ENCODE measurements at regions of chr2 and their contacts with region 1.

Region 1: GRCh38 chr2:13006829-13007717 is 290.3 kb downstream of the TRIB2 start:
- DNase-seq: no peak
- ATAC-seq: peak; percentile 91
- H3K4me3 ChIP-seq: no peak overlapping the region
- H3K27ac ChIP-seq: no peak overlapping the region
- H3K4me1 ChIP-seq: peaks cover 19% of the 10 kb centered on the region
- H3K27me3 ChIP-seq: no peaks in the 10 kb centered on the region
- CTCF ChIP-seq: peak; percentile 97

Region 2: DNA sequence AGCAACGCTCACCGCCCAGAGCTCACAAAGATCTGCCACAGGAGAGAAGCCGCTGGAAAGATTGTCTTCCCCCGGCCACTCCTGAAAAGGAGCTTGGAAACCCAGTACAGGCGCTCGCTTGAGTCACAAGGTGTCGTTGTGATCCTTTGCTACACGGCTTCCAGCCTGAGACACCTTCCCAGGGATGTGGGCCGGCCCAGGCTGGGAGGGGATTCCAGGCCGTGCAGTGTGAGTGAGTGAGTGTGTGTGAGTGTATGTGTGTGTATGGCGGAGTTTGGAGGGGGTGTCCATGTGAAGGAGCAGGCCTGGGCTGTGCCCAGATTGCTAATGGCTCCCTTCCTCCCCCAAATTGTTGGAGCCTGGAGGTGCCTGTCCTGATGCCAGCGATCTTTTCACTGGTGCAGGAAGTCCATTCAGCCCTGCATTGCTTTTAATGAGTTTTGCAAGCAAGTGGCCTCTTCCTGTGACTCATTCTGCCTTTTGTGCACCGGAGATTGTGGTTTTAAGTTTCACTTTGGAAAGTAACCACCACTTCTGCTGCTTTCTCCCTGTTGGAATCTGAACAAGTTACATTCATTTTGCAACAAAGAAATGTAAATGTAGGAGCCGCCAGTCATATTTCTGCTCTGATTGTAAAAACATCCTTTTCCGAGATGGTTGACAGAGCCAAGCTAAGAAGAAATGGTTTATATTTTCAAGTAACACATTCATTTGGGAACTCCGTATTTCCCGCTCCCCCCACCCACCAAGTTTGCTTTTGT is 1176.9 kb before region 1 on chr2:
- intact Hi-C with region 1: loop called (anchors 10 kb)
- DNase-seq: peak; percentile 82
- ATAC-seq: peak; percentile 92
- H3K4me3 ChIP-seq: peak overlapping the region; percentile 30
- H3K27ac ChIP-seq: peak overlapping the region; percentile 81
- H3K4me1 ChIP-seq: peaks cover 26% of the 10 kb centered on the region
- H3K27me3 ChIP-seq: no peaks in the 10 kb centered on the region
- CTCF ChIP-seq: peak; percentile 23

Region 3: DNA sequence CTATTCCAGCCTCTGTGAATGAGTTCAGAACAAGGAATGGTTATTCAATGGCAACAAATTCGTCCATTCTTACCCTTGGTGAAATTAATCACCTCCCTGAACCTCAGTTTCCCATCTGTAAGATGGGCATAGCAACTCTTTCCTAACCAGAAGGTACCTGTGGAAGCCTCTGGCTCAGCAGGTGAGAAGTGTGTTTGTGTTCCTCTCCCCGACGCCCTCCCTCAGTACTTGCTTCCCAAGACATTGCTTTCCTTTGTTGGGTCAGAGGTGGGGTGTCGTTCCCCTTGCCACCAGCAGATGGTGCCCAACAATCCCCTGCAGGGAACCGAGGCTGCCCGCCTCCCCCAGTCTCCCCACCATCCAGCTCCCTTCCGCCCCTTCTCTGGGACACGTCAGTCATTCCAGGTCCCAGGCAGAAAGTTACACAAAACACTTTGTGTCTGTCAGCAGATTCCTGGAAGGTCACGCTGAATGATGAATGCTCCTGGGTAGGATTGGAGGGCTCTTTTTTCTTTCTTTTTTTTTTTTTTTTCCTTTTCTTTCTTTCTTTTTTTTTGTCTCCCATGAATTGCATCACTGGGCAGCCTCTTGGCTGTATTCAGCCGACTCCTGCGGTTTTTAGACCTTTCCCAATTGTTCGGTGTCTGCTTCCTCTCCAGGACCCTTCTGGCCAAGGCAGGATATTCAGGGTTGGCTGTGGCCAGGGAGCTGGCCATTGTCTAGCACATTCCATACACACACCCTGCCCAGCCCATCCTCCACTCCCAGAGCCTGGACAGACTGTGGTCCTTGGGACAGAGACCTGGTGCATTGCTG is 1143.4 kb before region 1 on chr2:
- intact Hi-C with region 1: loop called (anchors 10 kb)
- DNase-seq: peak; percentile 88
- ATAC-seq: peak; percentile 96
- H3K4me3 ChIP-seq: no peak overlapping the region
- H3K27ac ChIP-seq: no peak overlapping the region
- H3K4me1 ChIP-seq: peaks cover 14% of the 10 kb centered on the region
- H3K27me3 ChIP-seq: no peaks in the 10 kb centered on the region
- CTCF ChIP-seq: peak; percentile 96

Region 4: DNA sequence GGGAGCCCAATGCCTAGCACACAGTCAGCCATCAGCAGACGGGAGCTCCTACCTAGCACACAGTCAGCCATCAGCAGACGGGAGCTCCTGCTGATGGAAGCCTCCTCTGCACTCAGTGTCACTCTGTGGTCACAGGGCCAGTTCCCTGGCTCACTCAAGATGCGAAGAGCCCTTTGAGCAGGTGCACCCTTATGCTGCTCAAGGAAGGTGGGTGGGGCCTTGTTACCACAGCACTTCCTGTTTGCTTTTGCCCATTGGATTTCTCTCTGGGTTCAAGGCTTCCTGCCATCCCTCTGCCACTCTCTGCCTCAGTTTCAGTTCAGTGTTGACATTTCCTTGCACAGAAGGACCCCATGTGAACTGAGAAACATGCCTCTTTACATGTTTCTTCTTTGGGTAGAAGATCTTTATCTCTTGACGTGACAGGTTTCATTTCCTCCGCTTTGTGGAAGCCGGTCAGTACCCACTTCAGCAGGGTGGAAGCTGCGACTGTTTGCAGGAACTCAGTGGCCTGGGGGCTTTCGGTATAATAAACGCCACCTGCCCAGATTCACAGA is 278.8 kb before region 1 on chr2:
- intact Hi-C with region 1: loop called (anchors 10 kb)
- DNase-seq: no peak
- ATAC-seq: peak; percentile 16
- H3K4me3 ChIP-seq: no peak overlapping the region
- H3K27ac ChIP-seq: no peak overlapping the region
- H3K4me1 ChIP-seq: peaks cover 64% of the 10 kb centered on the region
- H3K27me3 ChIP-seq: no peaks in the 10 kb centered on the region
- CTCF ChIP-seq: no peak

Region 5: DNA sequence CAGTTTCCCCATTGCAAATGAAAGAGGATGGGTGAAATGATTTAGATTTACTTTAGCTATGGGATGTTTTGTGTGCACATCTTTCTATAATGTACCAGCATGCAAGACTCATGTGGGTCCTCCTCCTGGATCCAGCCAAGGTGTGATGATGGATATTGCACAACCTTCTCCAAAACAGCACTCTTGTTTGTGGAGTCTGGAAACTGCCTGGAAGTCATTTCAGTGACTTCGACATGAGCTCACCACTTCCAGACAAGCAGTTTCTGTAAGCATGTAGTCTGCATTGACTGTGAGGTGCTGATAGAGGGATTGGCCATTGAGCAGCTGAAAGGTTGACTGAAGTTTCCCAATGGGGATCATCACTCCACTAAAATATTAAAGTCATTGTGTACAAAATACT is 136.4 kb before region 1 on chr2:
- intact Hi-C with region 1: no loop called
- DNase-seq: no peak
- ATAC-seq: no peak
- H3K4me3 ChIP-seq: no peak overlapping the region
- H3K27ac ChIP-seq: no peak overlapping the region
- H3K4me1 ChIP-seq: no peaks in the 10 kb centered on the region
- H3K27me3 ChIP-seq: no peaks in the 10 kb centered on the region
- CTCF ChIP-seq: no peak

Region 6: GRCh38 chr2:13414897-13415296 is 407.8 kb after region 1 on chr2:
- intact Hi-C with region 1: no loop called
- DNase-seq: no peak
- ATAC-seq: no peak
- H3K4me3 ChIP-seq: no peak overlapping the region
- H3K27ac ChIP-seq: no peak overlapping the region
- H3K4me1 ChIP-seq: no peaks in the 10 kb centered on the region
- H3K27me3 ChIP-seq: no peaks in the 10 kb centered on the region
- CTCF ChIP-seq: no peak

Measured in upper lobe of right lung (tissue), 1 donor.